ENCODE measurements at regions of chr11 and their contacts with region 1.

Region 1: GRCh38 chr11:67239783-67240575 is 26.3 kb upstream of the GRK2 start:
- DNase-seq: peak; percentile 98
- ATAC-seq: peak; percentile 94
- H3K4me3 Mint-ChIP-seq: peak overlapping the region; percentile 98
- H3K27ac Mint-ChIP-seq: peak overlapping the region; percentile 99
- H3K4me1 Mint-ChIP-seq: peaks cover 43% of the 10 kb centered on the region
- H3K27me3 Mint-ChIP-seq: no peaks in the 10 kb centered on the region

Region 2: DNA sequence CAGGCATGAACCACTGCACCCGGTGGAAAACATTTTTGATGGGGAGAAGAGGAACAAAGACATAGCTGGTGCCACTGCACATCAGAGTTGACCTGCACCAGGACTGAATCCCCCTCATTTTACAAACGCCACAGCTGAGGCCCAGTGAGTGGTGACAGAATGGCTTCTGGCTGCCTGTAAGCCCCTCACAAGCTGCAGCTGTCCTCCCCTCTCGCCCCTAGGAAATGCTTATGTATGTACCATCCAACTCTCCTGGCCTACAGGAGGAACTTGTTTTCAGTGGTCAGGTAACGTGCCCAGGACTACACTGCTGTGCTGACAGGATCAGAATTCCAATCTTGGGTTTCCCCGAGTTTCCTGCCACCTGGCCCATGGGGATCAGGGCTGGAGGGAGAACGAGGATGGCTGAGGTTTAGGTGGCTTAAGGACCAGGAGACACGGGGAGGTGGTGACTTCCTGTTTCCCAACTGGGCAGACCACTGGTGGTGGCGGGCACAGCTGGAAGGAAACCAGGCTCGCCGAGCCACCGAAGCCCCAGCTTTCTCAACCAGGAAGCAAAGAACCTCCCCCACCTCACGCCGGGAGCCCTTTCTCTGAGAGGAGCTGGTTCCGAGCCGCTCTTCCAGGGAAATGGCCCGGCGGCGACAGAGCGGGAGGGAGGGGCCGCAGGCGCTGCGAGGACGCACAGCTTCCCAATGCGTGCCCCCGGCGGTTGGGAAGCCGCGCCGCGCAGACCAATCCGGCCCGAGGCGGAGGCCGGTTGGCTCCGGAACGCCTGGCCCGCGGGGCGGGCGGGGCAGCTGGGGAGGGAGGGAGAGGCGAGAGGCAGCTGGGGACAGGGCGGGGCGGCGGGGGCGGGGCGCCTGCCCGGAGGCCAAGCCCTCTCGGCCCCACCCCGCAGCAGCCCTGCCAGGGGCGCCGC is 384.1 kb before region 1 on chr11:
- CTCF ChIA-PET with region 1: no interaction called
- POLR2A ChIA-PET with region 1: no interaction called
- intact Hi-C with region 1: loop called in 1 of 2 experiments (anchors 1 kb)
- DNase-seq: peak; percentile 94
- ATAC-seq: peak; percentile 83
- H3K4me3 Mint-ChIP-seq: peak overlapping the region; percentile 82
- H3K27ac Mint-ChIP-seq: peak overlapping the region; percentile 73
- H3K4me1 Mint-ChIP-seq: peaks cover 11% of the 10 kb centered on the region
- H3K27me3 Mint-ChIP-seq: no peaks in the 10 kb centered on the region

Region 3: GRCh38 chr11:67006139-67006884 is 233.7 kb before region 1 on chr11:
- CTCF ChIA-PET with region 1: no interaction called
- POLR2A ChIA-PET with region 1: no interaction called
- intact Hi-C with region 1: no loop called
- DNase-seq: peak; percentile 61
- ATAC-seq: peak; percentile 69
- H3K4me3 Mint-ChIP-seq: no peak overlapping the region
- H3K27ac Mint-ChIP-seq: no peak overlapping the region
- H3K4me1 Mint-ChIP-seq: no peaks in the 10 kb centered on the region
- H3K27me3 Mint-ChIP-seq: no peaks in the 10 kb centered on the region

Region 4: GRCh38 chr11:67082035-67082791 is 157.8 kb before region 1 on chr11:
- CTCF ChIA-PET with region 1: interaction called, 3 read pairs
- POLR2A ChIA-PET with region 1: no interaction called
- intact Hi-C with region 1: loop called (anchors 5 kb)
- DNase-seq: no peak
- ATAC-seq: no peak
- H3K4me3 Mint-ChIP-seq: no peak overlapping the region
- H3K27ac Mint-ChIP-seq: no peak overlapping the region
- H3K4me1 Mint-ChIP-seq: peaks cover 19% of the 10 kb centered on the region
- H3K27me3 Mint-ChIP-seq: peaks cover 5% of the 10 kb centered on the region

Region 5: DNA sequence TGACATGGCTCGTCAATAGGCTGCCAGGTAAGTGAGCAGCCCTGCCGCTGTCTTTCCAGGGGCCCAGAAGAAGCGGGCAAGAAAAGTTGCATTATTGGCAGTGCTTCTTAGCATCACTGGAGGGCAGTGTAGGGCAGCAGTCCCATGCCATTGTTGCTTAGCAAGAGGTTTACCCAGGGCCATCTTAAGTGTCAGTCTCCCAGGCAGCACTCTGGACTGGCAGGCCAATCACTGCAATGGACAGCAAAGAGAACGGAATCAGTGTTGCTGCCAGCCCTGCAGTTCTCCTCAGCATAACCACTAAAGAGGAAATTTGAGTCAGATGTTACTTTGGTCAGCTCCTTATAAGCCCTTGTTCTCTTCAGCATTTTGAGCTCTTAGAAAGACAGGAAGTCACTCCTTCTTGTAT is 12.9 kb after region 1 on chr11:
- CTCF ChIA-PET with region 1: interaction called, 11 read pairs
- POLR2A ChIA-PET with region 1: interaction called, 9 read pairs
- intact Hi-C with region 1: no loop called
- DNase-seq: peak; percentile 55
- ATAC-seq: peak; percentile 75
- H3K4me3 Mint-ChIP-seq: no peak overlapping the region
- H3K27ac Mint-ChIP-seq: peak overlapping the region; percentile 47
- H3K4me1 Mint-ChIP-seq: peaks cover 16% of the 10 kb centered on the region
- H3K27me3 Mint-ChIP-seq: no peaks in the 10 kb centered on the region

Region 6: DNA sequence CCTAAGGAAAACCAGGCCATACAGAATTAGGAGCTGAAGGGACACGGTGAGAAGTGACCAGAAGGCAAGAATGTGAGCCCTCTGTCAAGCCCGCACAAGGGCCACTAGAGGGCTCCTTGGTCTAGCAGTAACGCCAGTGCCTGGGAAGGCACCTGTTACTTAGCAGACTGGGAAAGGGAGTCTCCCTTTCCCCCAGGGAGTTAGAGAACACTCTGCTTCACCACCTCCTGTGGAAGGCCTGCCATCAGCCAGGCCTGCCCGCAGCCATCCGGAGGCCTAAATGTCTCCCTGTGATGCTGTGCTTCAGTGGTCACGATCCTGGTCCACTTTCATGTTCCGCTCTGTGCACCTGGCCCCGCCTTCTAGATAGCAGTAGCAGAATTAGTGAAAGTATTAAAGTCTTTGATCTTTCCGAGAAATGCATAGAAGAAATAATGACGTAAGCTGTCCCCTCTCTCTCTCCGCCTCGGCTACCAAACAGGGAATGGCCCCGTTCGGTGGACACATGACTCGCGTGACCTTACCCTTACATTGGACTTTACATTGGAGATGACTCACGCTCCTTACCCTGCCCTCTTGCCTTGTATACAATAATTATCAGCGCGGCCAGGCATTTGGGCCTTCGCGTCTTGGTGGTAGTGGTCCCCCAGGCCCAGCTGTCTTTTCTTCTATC is 332.9 kb after region 1 on chr11:
- CTCF ChIA-PET with region 1: no interaction called
- POLR2A ChIA-PET with region 1: no interaction called
- intact Hi-C with region 1: no loop called
- DNase-seq: peak; percentile 60
- ATAC-seq: peak; percentile 47
- H3K4me3 Mint-ChIP-seq: no peak overlapping the region
- H3K27ac Mint-ChIP-seq: no peak overlapping the region
- H3K4me1 Mint-ChIP-seq: no peaks in the 10 kb centered on the region
- H3K27me3 Mint-ChIP-seq: peaks cover 5% of the 10 kb centered on the region

Measured in activated CD4-positive, alpha-beta T cell treated with anti-CD3 and anti-CD28 coated beads for 36 hours (primary cell).